Left cardiac atrium (tissue), 4 donors: ENCODE measurements at regions of chrX and their contacts with region 1.

Region 1: DNA sequence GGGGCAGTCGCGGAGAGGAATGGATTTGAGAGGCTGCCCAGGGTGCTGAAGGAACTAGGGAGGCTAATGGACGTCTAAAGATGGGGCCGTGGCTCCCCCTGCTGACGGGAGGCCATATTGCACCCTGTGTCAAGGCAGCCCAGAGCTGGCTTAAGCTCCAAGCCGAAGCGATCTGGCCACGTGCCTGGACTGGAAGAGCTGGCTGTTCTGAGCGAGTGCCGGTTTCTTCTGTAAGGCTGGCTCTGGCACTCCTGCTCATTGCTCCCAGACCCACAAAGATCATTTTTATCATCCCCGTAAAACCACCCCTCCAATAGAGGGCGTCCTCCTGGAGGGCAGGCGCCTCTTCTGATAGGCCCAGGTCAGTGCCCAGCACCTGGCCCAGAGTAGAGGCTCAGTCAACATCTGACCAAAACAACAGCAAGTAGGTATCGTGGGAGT is 5.6 kb downstream of the PNCK start:
- DNase-seq: peak; percentile 86
- ATAC-seq: peak; percentile 85 to 90

Region 2: GRCh38 chrX:152958524-152959465 is 709.2 kb before region 1 on chrX:
- intact Hi-C with region 1: loop called in 1 of 2 experiments (anchors 10 kb)
- DNase-seq: peak; percentile 89
- ATAC-seq: peak; percentile 99

Region 3: DNA sequence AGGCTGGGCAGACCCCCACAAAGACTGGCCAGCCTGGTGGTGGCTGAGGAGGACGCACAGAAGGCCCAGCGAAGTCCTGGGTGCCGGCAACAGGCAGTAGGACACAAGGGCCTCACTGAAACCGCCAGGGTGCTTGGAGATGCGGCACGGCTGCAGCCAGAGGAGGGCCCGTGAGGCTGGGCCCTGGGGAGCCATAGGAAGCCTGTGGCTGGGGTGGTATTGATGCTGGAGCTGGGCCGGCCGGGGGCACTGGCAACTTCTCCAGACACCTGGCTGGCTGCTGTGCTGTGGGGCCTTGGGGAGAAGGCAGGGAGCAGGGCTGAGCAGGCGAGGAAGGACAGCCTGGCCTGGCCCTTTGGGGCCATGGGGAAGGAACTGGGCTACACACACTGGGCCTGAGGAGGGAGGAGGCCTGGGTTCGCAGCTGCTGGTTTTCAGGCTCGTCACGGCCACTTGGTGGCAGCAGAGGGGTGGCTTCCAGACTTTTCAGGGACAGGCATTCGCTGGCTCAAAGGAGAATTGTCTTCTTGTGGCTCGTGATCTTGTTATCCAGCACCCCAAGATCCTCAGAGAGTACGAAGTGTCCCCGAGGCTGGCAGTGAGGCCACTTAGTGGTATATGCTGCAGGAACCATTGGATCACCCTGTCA is 113.3 kb before region 1 on chrX:
- intact Hi-C with region 1: loop called in 1 of 2 experiments (anchors 5 kb)
- DNase-seq: peak; percentile 73
- ATAC-seq: peak; percentile 54 to 67

Region 4: DNA sequence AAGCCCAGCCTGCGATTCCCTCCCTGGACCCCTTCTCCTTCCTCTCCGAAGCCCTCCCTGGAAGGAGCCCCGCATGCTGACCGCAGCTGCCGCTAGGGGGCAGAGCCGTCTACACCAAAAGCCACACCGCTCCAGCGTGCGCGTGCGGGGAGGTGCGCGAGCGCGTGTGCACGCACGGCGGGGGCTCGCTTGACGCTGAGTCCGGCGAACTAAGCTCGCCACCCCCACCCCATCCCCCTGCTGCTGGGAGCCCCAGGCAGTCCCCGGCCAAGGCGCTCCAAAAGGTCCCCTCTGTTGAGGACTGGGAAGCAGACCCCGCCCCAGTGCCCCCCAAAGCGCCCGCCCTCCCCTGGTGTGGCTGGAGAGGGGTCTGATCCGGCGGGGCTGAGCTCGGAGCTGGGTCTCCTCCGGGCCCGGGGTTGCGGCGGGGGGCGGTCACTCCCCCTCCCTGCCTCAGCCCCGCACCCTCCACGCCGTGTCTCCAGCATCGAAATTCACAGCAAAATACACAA is 58.0 kb before region 1 on chrX:
- intact Hi-C with region 1: loop called in 1 of 2 experiments (anchors 10 kb)
- DNase-seq: peak; percentile 75
- ATAC-seq: peak; percentile 95 to 99